ENCODE measurements at regions of chr9 and their contacts with region 1.

Region 1: GRCh38 chr9:613771-614347 is 227.6 kb upstream of the DMRT1 start:
- DNase-seq: peak; percentile 69
- ATAC-seq: peak; percentile 92
- H3K4me3 Mint-ChIP-seq: no peak overlapping the region
- H3K27ac Mint-ChIP-seq: peak overlapping the region; percentile 44
- H3K4me1 Mint-ChIP-seq: peaks cover 7% of the 10 kb centered on the region
- H3K27me3 Mint-ChIP-seq: peaks cover 7% of the 10 kb centered on the region

Region 2: DNA sequence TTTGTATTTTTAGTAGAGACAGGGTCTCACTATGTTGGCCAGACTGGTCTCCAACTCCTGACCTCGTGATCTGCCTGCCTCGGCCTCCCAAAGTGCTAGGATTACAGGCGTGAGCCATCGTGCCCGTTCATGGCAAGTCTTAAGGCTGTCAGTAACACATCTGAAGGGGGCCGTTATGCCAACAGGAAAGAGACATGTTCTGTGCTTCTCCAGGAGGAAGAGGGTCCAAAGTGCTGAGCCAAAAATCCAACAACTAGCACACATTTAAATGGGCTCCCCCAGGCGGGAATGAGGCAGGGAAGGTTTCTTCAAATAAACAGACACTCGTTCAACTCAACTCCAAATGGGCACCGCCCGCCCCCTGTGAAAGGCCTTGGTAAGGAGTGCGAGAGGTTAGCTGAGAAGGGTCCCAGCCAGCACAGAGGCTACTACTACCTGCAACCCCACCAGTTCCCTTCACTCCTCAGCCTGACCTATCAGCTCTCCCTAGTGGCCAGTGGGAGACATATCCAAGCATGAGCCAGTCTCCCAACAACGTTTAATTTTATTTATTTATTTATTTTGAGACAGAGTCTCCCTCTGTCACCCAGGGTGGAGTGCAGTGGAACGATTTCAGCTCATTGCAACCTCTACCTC is 143.5 kb after region 1 on chr9:
- CTCF ChIA-PET with region 1: interaction called, 108 read pairs
- DNase-seq: peak; percentile 59
- ATAC-seq: peak; percentile 66
- H3K4me3 Mint-ChIP-seq: no peak overlapping the region
- H3K27ac Mint-ChIP-seq: no peak overlapping the region
- H3K4me1 Mint-ChIP-seq: peaks cover 78% of the 10 kb centered on the region
- H3K27me3 Mint-ChIP-seq: peaks cover 8% of the 10 kb centered on the region

Region 3: GRCh38 chr9:763692-764524 is 150.0 kb after region 1 on chr9:
- CTCF ChIA-PET with region 1: interaction called, 108 read pairs
- DNase-seq: peak; percentile 79
- ATAC-seq: peak; percentile 99
- H3K4me3 Mint-ChIP-seq: no peak overlapping the region
- H3K27ac Mint-ChIP-seq: no peak overlapping the region
- H3K4me1 Mint-ChIP-seq: peaks cover 34% of the 10 kb centered on the region
- H3K27me3 Mint-ChIP-seq: peaks cover 40% of the 10 kb centered on the region

Measured in activated CD8-positive, alpha-beta memory T cell treated with anti-CD3 and anti-CD28 coated beads, Interleukin-2, amount 10 ng/mL, durations not matched to agents 7 days and 5 days (primary cell).